Pancreas (tissue), 10 donors: ENCODE measurements at regions of chr17 and their contacts with region 1.

Region 1: GRCh38 chr17:17641621-17642409 is 39.4 kb upstream of the RAI1 start:
- DNase-seq: peak; percentile 60 to 87 (median 74)
- ATAC-seq: peak; percentile 92 to 98 (median 95)
- H3K4me3 ChIP-seq: no peak overlapping the region
- H3K27ac ChIP-seq: no peak overlapping the region
- H3K4me1 ChIP-seq: no peaks in the 10 kb centered on the region
- H3K27me3 ChIP-seq: no peaks in the 10 kb centered on the region
- CTCF ChIP-seq: peak; percentile 71 to 91 (median 85)

Region 2: GRCh38 chr17:17356149-17356930 is 285.5 kb before region 1 on chr17:
- intact Hi-C with region 1: loop called (anchors 2 to 10 kb)
- DNase-seq: peak; percentile 56 to 87 (median 74)
- ATAC-seq: peak; percentile 90 to 98 (median 97)
- H3K4me3 ChIP-seq: no peak overlapping the region
- H3K27ac ChIP-seq: no peak overlapping the region
- H3K4me1 ChIP-seq: no peaks in the 10 kb centered on the region
- H3K27me3 ChIP-seq: peaks cover 0 to 3% (median 0%) of the 10 kb centered on the region in 4 donors
- CTCF ChIP-seq: peak; percentile 95 to 98 (median 97)

Region 3: GRCh38 chr17:17445925-17446665 is 195.7 kb before region 1 on chr17:
- intact Hi-C with region 1: no loop called
- DNase-seq: peak in 3 of 6 donors; percentile 52 to 71 (median 56)
- ATAC-seq: peak; percentile 63 to 89 (median 84)
- H3K4me3 ChIP-seq: no peak overlapping the region
- H3K27ac ChIP-seq: peak overlapping the region; percentile 43 to 80 (median 63)
- H3K4me1 ChIP-seq: no peaks in the 10 kb centered on the region
- H3K27me3 ChIP-seq: no peaks in the 10 kb centered on the region
- CTCF ChIP-seq: no peak

Region 4: DNA sequence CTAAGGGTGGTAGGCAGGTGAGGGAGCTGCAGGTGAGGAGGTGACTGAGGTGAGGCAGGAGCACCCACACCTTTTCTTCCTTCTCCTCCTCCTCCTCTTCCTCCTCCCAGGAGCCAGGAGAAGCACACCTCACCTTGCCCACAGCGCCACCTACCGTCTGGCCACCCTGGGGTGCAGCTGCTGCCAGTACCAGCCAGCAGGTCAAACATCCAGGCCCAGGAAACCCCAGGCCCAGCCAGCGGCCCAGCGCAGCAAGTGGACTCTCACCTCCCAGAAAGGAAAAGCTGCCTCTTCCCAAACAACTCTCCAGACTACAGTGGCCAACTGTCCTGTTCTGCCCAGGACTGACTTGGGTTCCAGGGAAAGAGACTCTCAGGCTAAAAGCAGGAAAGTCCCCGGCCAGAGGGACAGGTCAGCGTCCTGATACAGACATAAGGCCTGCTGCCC is 73.0 kb before region 1 on chr17:
- intact Hi-C with region 1: loop called in 1 of 3 experiments (anchors 5 kb)
- DNase-seq: peak; percentile 82 to 99 (median 90)
- ATAC-seq: peak; percentile 75 to 82 (median 78)
- H3K4me3 ChIP-seq: no peak overlapping the region
- H3K27ac ChIP-seq: peak overlapping the region in 3 of 4 donors; percentile 10 to 55 (median 33)
- H3K4me1 ChIP-seq: peaks cover 30 to 42% (median 30%) of the 10 kb centered on the region in 3 donors
- H3K27me3 ChIP-seq: no peaks in the 10 kb centered on the region
- CTCF ChIP-seq: peak; percentile 65 to 85 (median 79)

Region 5: DNA sequence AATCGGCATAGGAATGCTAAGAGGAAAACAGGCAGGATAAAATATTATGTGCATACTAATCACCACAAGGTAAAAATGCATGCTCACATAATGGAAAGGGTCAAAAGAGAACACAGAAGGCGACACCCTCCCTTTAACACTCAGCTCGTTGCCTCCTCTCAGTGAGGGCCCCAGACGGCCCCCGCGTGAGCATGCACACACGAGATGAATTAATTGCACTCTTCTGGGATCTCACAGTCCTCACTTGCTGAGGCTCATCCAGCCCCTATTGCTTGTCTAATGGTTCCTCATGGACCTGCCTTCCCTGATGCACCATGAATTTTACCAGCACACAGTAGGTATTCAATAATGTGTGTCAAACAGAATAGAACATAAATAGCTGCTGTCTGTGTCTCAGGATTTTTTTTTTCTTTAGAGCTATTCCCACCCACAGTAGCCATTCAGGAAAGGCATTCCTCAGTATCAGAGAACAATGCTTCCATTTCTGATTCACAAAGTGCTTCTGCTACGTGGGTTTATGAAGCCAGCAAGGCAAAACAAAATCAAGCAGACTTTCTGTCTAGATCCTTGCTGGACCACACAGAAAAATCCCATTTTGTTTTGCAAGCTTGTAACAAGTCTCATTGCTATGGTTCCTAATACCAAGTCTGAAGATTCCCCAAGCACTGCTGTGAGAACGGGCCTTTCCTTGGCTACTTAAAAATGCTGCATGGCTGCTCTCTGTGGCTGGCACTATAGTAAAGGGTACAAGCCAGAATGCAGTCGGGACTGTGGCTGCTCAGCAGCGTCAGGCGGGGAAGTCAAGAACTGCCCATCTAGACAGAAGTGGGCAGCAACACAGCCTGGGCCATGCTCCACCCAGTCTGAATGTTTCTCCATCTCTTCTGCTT is 286.8 kb after region 1 on chr17:
- intact Hi-C with region 1: no loop called
- DNase-seq: no peak
- ATAC-seq: no peak
- H3K4me3 ChIP-seq: no peak overlapping the region
- H3K27ac ChIP-seq: no peak overlapping the region
- H3K4me1 ChIP-seq: peaks cover 13 to 17% (median 17%) of the 10 kb centered on the region in 3 donors
- H3K27me3 ChIP-seq: no peaks in the 10 kb centered on the region
- CTCF ChIP-seq: no peak